Calu3 (cell line): ENCODE measurements at regions of chr20 and their contacts with region 1.

Region 1: DNA sequence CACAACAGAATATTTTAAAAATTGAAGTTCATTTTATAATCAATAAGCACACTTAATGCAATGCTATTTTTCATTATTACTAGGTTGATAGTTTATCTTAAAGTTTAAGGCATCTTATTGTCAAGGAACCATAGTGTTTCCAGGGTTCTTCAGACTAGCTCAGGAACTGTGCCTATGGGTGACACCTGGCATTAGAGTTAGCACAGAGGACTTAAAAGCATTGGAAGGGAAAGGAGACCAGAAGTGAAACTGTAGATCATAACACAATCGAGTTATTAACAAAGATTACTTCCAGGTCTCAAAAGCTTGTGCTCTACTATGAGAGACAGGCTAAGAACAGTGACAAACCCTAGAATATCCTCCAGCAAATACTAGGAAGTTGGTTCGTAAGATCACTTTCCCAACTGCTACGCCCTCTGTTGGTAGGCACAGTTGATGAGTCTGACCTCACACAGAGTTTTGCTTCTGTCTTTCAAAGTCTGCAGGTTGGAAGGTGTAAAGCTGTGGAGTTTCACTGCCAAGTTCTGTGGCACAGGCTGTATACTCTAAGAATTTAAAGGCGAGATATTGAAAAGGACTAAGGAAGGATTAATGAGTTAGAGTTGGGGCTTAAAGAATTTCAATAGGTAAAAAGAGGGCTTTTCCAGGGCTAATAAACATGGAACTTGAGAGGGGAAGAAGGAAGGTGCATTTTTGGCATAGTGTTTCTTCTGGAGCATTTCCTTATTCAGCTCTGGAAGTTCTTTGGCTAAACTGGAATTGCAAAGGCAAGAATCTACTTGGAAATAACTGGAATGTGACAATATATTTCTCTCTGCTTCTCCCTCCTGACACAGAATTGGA is 531.3 kb upstream of the JAG1 start:
- DNase-seq: peak; percentile 66
- H3K4me3 Mint-ChIP-seq: no peak overlapping the region
- H3K27ac Mint-ChIP-seq: peak overlapping the region; percentile 45
- H3K4me1 Mint-ChIP-seq: peaks cover 28% of the 10 kb centered on the region
- H3K27me3 Mint-ChIP-seq: no peaks in the 10 kb centered on the region
- CTCF ChIP-seq: peak; percentile 40

Region 2: DNA sequence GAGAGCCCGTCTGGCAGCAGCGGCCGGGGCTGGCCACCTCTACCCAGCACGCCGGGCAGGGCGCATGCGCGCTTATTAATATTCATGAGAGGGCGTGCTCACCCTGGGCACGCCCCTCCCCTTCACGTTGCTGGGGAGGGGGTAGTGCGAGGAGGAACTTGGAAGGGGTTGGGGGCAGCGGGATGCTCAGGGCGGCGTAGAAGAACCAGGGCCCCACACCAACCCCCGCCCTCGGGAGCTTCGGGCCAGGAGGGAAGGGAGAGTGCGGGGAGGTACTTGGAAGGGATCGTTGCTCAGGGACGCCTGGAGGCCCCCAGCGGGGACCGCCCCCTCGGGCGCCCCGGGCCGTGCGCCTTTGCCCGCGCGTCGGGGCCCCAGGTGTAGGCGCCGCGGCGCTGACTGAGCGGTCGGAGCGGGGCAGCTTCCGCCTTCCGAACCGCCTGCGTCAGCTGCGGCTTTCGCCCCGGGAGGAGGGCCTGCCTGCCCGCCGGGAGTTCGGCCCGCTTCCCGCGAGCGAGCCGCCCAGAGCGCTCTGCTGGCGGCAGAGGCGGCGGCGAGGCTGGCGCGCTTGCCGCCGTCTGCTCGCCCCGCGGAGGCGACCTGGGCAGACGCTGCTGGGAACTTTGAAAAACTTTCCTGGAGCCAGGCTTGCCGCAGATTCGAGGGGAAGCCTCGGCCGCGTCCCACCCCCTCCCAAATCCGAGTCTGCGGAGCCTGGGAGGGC is 531.0 kb before region 1 on chr20 and contains the start of gene JAG1:
- CTCF ChIA-PET with region 1: interaction called, 6 read pairs
- intact Hi-C with region 1: loop called (anchors 5 kb)
- DNase-seq: peak; percentile 95
- H3K4me3 Mint-ChIP-seq: peak within 1 kb of the TSS; percentile 82
- H3K27ac Mint-ChIP-seq: peak within 1 kb of the TSS; percentile 93
- H3K4me1 Mint-ChIP-seq: peaks cover 19% of the 10 kb centered on the region
- H3K27me3 Mint-ChIP-seq: no peaks in the 10 kb centered on the region
- CTCF ChIP-seq: no peak
- total RNA-seq, gene JAG1: 156 and 245 TPM in 2 replicates

Region 3: DNA sequence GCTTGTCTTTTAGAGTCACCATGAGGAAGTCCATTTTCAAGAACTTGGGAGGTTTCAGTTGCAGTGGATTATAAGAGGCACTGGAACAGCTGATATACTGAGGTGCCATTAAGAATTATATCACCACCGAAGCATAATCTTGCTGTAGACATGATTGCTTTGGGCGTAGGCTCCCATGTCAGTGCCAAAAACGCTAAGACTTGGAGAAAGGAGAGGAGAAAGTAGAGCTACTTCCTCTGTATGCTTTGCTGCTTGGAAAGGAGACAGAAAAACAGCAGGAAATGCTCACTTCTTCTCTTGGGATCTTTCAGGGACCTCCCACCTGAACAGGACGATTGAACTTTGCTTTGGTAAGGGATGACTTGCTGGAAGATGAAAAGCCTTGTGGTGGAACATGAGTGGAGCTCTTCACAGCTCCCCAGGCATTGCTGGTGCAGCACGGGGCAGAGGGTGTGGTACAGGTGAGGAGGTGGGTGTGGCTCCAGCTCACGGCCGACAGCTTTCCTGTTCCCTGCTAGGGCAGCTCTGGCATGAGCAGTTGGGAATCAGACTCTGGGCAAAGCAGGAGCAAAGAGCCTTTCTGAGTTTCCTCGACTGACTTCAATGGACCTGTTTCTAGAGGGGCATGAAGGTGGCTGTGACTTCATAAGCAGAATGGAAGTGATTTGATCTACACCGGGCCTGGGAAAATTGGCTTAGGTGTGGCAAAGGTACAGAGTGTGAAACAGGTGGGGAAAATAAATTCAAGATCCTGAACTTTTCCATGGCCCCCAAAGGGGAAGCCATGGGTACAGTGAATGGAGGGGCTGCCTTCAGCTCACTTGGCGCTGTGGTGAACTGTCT is 340.9 kb before region 1 on chr20:
- CTCF ChIA-PET with region 1: interaction called, 3 read pairs
- intact Hi-C with region 1: loop called (anchors 10 kb)
- DNase-seq: peak; percentile 73
- H3K4me3 Mint-ChIP-seq: peak overlapping the region; percentile 57
- H3K27ac Mint-ChIP-seq: peak overlapping the region; percentile 69
- H3K4me1 Mint-ChIP-seq: peaks cover 53% of the 10 kb centered on the region
- H3K27me3 Mint-ChIP-seq: no peaks in the 10 kb centered on the region
- CTCF ChIP-seq: no peak

Region 4: GRCh38 chr20:11098888-11099287 is 106.3 kb before region 1 on chr20:
- CTCF ChIA-PET with region 1: no interaction called
- intact Hi-C with region 1: loop called (anchors 10 kb)
- DNase-seq: peak; percentile 22
- H3K4me3 Mint-ChIP-seq: no peak overlapping the region
- H3K27ac Mint-ChIP-seq: no peak overlapping the region
- H3K4me1 Mint-ChIP-seq: peaks cover 26% of the 10 kb centered on the region
- H3K27me3 Mint-ChIP-seq: no peaks in the 10 kb centered on the region
- CTCF ChIP-seq: no peak

Region 5: GRCh38 chr20:11159728-11160127 is 45.4 kb before region 1 on chr20:
- CTCF ChIA-PET with region 1: no interaction called
- intact Hi-C with region 1: loop called (anchors 5 kb)
- DNase-seq: no peak
- H3K4me3 Mint-ChIP-seq: no peak overlapping the region
- H3K27ac Mint-ChIP-seq: peak overlapping the region; percentile 90
- H3K4me1 Mint-ChIP-seq: peaks cover 45% of the 10 kb centered on the region
- H3K27me3 Mint-ChIP-seq: no peaks in the 10 kb centered on the region
- CTCF ChIP-seq: no peak

Region 6: DNA sequence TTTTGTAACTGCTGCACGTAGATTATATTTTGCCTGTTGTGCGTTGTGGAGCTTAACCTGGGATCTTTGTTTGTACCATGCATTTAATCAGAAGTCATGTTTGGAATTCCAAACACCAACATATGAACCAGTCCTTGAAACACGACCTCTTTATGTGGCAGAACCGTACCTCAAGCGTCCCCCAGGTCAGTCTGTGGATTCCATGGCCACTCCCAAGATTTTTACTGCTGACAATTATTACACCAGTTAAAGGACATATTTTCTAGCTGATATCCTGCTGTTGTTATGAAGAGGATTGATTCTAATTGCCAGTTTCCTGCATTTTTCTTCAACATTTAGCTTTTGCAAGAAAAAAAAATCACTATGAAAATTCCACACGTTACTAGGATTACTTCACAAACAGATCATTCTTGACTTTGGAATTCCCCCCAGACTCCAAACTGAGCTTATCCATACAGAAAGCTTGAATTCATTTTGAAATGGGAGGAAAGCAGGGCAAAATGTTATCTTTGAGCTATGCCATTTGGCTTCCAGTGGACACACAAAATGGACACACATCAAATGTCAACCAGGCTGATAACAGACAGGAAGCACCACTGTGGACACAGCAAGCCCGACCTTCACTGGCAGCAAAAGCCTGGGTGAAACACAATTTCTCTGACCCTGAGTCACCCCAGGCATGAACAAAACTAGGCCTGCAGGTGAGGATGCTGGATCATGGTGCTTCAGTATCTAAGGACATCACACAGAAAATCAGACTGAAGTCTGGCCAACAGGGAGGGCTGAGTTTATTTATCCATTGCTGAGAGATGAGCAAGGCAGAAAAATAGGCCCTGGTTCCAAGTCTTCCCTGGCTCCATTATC is 11.5 kb after region 1 on chr20:
- CTCF ChIA-PET with region 1: interaction called, 14 read pairs
- intact Hi-C with region 1: no loop called
- DNase-seq: peak; percentile 2
- H3K4me3 Mint-ChIP-seq: no peak overlapping the region
- H3K27ac Mint-ChIP-seq: peak overlapping the region; percentile 52
- H3K4me1 Mint-ChIP-seq: peaks cover 36% of the 10 kb centered on the region
- H3K27me3 Mint-ChIP-seq: no peaks in the 10 kb centered on the region
- CTCF ChIP-seq: no peak

Region 7: DNA sequence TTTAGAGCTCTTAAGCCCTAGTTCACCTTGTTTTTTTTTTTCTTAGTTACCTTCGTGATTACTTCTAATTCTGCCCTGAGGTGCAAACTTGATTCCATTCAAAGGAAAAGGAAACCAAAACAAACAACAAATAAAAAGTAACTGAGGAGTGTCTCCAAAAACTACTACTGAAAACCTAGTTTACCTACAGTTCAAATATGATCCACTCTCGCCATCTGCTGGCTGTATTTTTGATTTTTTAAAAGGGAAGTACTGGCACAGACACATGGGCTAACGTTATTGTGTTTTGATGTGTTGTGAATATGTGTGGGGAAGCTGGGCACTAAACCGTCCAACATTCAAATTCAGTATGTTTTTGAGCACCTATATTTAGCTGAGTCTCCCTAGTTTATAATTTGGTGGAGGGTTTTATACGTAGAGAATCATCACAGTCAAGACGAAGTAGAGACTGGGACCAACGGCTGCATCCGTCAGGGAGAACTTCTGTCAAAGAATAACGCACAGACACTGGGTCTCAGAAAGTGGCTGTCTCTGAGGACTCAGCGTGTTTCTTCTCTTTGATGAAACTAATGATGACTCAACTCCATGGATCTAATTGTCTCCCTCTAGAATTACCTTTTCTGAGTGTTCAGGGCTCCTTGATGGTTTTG is 339.0 kb after region 1 on chr20:
- CTCF ChIA-PET with region 1: interaction called, 3 read pairs
- intact Hi-C with region 1: loop called (anchors 5 kb)
- DNase-seq: peak; percentile 32
- H3K4me3 Mint-ChIP-seq: no peak overlapping the region
- H3K27ac Mint-ChIP-seq: no peak overlapping the region
- H3K4me1 Mint-ChIP-seq: peaks cover 6% of the 10 kb centered on the region
- H3K27me3 Mint-ChIP-seq: no peaks in the 10 kb centered on the region
- CTCF ChIP-seq: no peak